ENCODE measurements at regions of chr11 and their contacts with region 1.

Region 1: GRCh38 chr11:118883368-118884071 is at the start of gene CXCR5:
- DNase-seq: peak; percentile 80
- ATAC-seq: peak; percentile 68
- H3K4me3 Mint-ChIP-seq: peak within 1 kb of the TSS; percentile 75
- H3K27ac Mint-ChIP-seq: peak within 1 kb of the TSS; percentile 90
- H3K4me1 Mint-ChIP-seq: peaks cover 80% of the 10 kb centered on the region
- H3K27me3 Mint-ChIP-seq: no peaks in the 10 kb centered on the region
- total RNA-seq, gene CXCR5: 18.9 to 21.3 TPM

Region 2: GRCh38 chr11:118699506-118700220 is 183.9 kb before region 1 on chr11:
- CTCF ChIA-PET with region 1: interaction called, 8 read pairs
- POLR2A ChIA-PET with region 1: no interaction called
- intact Hi-C with region 1: loop called (anchors 5 to 10 kb)
- DNase-seq: peak; percentile 48
- ATAC-seq: no peak
- H3K4me3 Mint-ChIP-seq: no peak overlapping the region
- H3K27ac Mint-ChIP-seq: peak overlapping the region; percentile 56
- H3K4me1 Mint-ChIP-seq: peaks cover 53% of the 10 kb centered on the region
- H3K27me3 Mint-ChIP-seq: no peaks in the 10 kb centered on the region

Region 3: DNA sequence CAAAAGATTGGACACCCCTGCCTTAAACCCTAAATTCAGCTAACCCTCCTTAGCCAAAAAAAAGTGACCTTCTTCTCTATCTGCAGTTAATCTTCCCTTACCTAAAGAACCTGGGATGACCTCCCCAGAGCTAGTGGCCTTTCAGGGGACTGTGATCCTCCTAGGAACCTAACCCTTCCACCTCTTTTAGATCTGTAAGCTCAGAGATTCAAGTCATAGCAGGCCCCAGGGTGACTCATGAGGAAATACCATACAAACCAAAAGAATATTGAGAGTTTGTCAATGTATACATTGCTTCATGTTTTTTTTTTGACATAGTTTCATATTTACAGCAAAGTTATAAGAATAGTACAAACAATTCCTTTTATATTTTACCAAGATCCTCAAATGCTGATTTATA is 38.2 kb before region 1 on chr11:
- CTCF ChIA-PET with region 1: interaction called, 7 read pairs
- POLR2A ChIA-PET with region 1: interaction called, 4 read pairs
- intact Hi-C with region 1: loop called (anchors 2 to 5 kb)
- DNase-seq: peak; percentile 55
- ATAC-seq: peak; percentile 70
- H3K4me3 Mint-ChIP-seq: peak overlapping the region; percentile 5
- H3K27ac Mint-ChIP-seq: peak overlapping the region; percentile 68
- H3K4me1 Mint-ChIP-seq: peaks cover 47% of the 10 kb centered on the region
- H3K27me3 Mint-ChIP-seq: no peaks in the 10 kb centered on the region

Region 4: GRCh38 chr11:118870396-118871345 is 12.8 kb before region 1 on chr11:
- CTCF ChIA-PET with region 1: interaction called, 12 read pairs
- POLR2A ChIA-PET with region 1: interaction called, 21 read pairs
- intact Hi-C with region 1: loop called (anchors 1 kb)
- DNase-seq: peak; percentile 61
- ATAC-seq: peak; percentile 70
- H3K4me3 Mint-ChIP-seq: peak overlapping the region; percentile 71
- H3K27ac Mint-ChIP-seq: peak overlapping the region; percentile 99
- H3K4me1 Mint-ChIP-seq: peaks cover 57% of the 10 kb centered on the region
- H3K27me3 Mint-ChIP-seq: no peaks in the 10 kb centered on the region

Region 5: DNA sequence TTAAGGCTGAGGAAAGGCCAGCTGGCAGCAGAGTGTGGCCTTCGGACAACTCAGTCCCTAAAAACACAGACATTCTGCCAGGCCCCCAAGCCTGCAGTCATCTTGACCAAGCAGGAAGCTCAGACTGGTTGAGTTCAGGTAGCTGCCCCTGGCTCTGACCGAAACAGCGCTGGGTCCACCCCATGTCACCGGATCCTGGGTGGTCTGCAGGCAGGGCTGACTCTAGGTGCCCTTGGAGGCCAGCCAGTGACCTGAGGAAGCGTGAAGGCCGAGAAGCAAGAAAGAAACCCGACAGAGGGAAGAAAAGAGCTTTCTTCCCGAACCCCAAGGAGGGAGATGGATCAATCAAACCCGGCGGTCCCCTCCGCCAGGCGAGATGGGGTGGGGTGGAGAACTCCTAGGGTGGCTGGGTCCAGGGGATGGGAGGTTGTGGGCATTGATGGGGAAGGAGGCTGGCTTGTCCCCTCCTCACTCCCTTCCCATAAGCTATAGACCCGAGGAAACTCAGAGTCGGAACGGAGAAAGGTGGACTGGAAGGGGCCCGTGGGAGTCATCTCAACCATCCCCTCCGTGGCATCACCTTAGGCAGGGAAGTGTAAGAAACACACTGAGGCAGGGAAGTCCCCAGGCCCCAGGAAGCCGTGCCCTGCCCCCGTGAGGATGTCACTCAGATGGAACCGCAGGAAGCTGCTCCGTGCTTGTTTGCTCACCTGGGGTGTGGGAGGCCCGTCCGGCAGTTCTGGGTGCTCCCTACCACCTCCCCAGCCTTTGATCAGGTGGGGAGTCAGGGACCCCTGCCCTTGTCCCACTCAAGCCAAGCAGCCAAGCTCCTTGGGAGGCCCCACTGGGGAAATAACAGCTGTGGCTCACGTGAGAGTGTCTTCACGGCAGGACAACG is 11.9 kb after region 1 on chr11:
- CTCF ChIA-PET with region 1: interaction called, 5 read pairs
- POLR2A ChIA-PET with region 1: interaction called, 12 read pairs
- intact Hi-C with region 1: loop called in 1 of 2 experiments (anchors 2 kb)
- DNase-seq: peak; percentile 88
- ATAC-seq: peak; percentile 86
- H3K4me3 Mint-ChIP-seq: peak overlapping the region; percentile 52
- H3K27ac Mint-ChIP-seq: peak overlapping the region; percentile 92
- H3K4me1 Mint-ChIP-seq: peaks cover 72% of the 10 kb centered on the region
- H3K27me3 Mint-ChIP-seq: no peaks in the 10 kb centered on the region

Measured in activated CD4-positive, alpha-beta T cell treated with anti-CD3 and anti-CD28 coated beads for 36 hours (primary cell).